Activated CD8-positive, alpha-beta T cell treated with anti-CD3 and anti-CD28 coated beads for 36 hours (primary cell): ENCODE measurements at regions of chr13 and their contacts with region 1.

Region 1: GRCh38 chr13:99269627-99270241 is 11.6 kb upstream of the GPR18 start:
- DNase-seq: peak; percentile 38
- ATAC-seq: peak; percentile 60
- H3K4me3 Mint-ChIP-seq: no peak overlapping the region
- H3K27ac Mint-ChIP-seq: peak overlapping the region; percentile 69
- H3K4me1 Mint-ChIP-seq: peaks cover 65% of the 10 kb centered on the region
- H3K27me3 Mint-ChIP-seq: no peaks in the 10 kb centered on the region
- CTCF ChIP-seq: peak; percentile 85

Region 2: GRCh38 chr13:99185606-99186005 is 84.1 kb before region 1 on chr13:
- CTCF ChIA-PET with region 1: interaction called, 264 read pairs
- POLR2A ChIA-PET with region 1: no interaction called
- intact Hi-C with region 1: no loop called
- DNase-seq: no peak
- ATAC-seq: no peak
- H3K4me3 Mint-ChIP-seq: no peak overlapping the region
- H3K27ac Mint-ChIP-seq: no peak overlapping the region
- H3K4me1 Mint-ChIP-seq: peaks cover 3% of the 10 kb centered on the region
- H3K27me3 Mint-ChIP-seq: no peaks in the 10 kb centered on the region
- CTCF ChIP-seq: no peak

Region 3: GRCh38 chr13:99281811-99282263 is 12.1 kb after region 1 on chr13:
- CTCF ChIA-PET with region 1: interaction called, 39 read pairs
- POLR2A ChIA-PET with region 1: interaction called, 4 read pairs
- intact Hi-C with region 1: no loop called
- DNase-seq: peak; percentile 73
- ATAC-seq: peak; percentile 75
- H3K4me3 Mint-ChIP-seq: no peak overlapping the region
- H3K27ac Mint-ChIP-seq: peak overlapping the region; percentile 28
- H3K4me1 Mint-ChIP-seq: peaks cover 87% of the 10 kb centered on the region
- H3K27me3 Mint-ChIP-seq: no peaks in the 10 kb centered on the region
- CTCF ChIP-seq: no peak

Region 4: GRCh38 chr13:99322297-99323103 is 52.8 kb after region 1 on chr13:
- CTCF ChIA-PET with region 1: interaction called, 16 read pairs
- POLR2A ChIA-PET with region 1: interaction called, 4 read pairs
- intact Hi-C with region 1: no loop called
- DNase-seq: peak; percentile 70
- ATAC-seq: peak; percentile 78
- H3K4me3 Mint-ChIP-seq: peak overlapping the region; percentile 47
- H3K27ac Mint-ChIP-seq: peak overlapping the region; percentile 94
- H3K4me1 Mint-ChIP-seq: peaks cover 77% of the 10 kb centered on the region
- H3K27me3 Mint-ChIP-seq: no peaks in the 10 kb centered on the region
- CTCF ChIP-seq: no peak

Region 5: DNA sequence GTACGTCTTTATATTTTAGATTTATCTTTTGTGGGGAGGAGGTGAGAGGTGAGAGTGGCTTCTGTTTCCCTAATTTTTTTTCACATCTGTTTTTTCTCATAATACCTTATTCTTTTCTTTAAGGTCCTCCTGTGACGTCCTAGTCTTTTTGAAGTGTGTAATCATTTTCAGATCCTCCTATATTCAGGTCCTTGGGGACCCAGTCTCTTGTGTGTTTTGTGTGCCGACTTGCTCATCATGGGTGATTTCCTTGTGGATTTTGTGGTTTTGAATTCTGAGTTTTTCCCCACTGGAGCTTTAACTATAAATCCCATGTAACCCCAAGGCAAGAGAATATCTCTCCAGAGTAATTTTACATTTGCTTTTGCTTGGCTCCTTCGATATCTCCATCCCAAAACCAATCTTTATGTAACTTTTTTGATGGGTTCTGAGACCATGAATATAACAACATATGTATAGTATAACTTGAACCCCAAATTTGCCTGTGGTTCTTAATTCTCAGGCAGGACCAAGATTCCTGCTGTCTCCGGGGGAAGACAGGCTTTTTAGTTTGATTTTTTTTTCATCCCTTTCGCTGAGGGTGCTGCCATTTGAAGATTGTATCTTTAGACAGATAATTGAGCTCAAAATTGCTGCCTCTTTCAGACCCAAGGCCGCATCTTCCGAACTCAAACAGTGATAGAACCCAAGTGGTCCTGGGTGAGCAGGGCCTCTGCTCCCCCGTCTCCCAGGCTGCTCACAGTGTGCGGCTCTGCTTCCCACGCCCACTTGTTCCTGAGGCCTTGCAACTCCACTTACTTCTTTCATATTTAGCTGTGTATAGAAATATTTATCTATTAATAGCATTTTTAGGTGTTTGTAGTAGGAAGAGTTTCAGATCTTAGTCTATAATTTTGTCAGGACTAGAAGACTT is 96.6 kb after region 1 on chr13:
- CTCF ChIA-PET with region 1: interaction called, 26 read pairs
- POLR2A ChIA-PET with region 1: interaction called, 4 read pairs
- intact Hi-C with region 1: no loop called
- DNase-seq: peak; percentile 48
- ATAC-seq: peak; percentile 22
- H3K4me3 Mint-ChIP-seq: peak overlapping the region; percentile 38
- H3K27ac Mint-ChIP-seq: peak overlapping the region; percentile 61
- H3K4me1 Mint-ChIP-seq: peaks cover 87% of the 10 kb centered on the region
- H3K27me3 Mint-ChIP-seq: no peaks in the 10 kb centered on the region
- CTCF ChIP-seq: no peak

Region 6: GRCh38 chr13:99393791-99394735 is 124.3 kb after region 1 on chr13:
- CTCF ChIA-PET with region 1: interaction called, 280 read pairs
- POLR2A ChIA-PET with region 1: no interaction called
- intact Hi-C with region 1: no loop called
- DNase-seq: peak; percentile 4
- ATAC-seq: no peak
- H3K4me3 Mint-ChIP-seq: no peak overlapping the region
- H3K27ac Mint-ChIP-seq: no peak overlapping the region
- H3K4me1 Mint-ChIP-seq: peaks cover 30% of the 10 kb centered on the region
- H3K27me3 Mint-ChIP-seq: no peaks in the 10 kb centered on the region
- CTCF ChIP-seq: no peak